ENCODE measurements at regions of chr15 and their contacts with region 1.

Region 1: GRCh38 chr15:40175160-40175559 is 14.3 kb downstream of the BUB1B start:
- DNase-seq: no peak
- ATAC-seq: no peak
- H3K4me3 ChIP-seq: no peak overlapping the region
- H3K27ac ChIP-seq: no peak overlapping the region
- H3K4me1 ChIP-seq: no peaks in the 10 kb centered on the region
- H3K27me3 ChIP-seq: no peaks in the 10 kb centered on the region
- CTCF ChIP-seq: no peak

Region 2: DNA sequence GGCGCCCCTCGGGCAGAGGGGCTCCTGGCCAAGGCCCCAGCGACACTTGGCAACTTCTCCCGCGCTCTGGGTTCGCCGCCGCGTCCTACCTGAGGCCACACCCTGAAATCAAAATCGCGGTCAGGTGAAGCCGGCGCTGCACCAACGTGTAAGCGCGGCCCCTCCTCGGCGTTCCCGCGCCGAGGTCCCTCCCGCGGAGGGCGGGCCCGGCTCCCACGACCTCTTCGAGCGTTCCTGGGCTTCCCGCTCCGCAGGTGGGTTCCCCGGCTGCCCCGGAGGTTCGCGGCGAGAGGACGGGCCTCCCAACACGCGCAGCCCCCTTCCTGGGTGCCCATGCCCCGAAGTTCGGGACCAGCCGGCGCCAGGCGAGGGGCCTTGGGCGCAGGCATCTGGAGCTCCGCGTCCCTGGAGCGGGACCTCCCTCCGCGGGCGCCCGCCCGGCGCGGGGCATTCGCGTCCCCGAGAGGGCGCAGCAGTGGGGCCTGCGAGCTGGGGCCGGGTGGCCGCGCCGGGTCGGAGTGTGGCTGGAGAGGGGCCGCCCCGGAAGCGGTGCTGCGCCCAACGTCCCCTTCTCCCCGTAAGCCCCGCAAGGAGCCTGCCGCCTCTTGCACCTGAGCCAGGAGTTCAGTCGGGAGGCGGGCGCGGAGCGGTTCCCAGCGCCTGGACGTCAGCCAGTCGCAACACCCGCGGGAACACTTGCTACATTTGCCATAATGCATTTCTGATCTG is 77.4 kb after region 1 on chr15:
- intact Hi-C with region 1: loop called in 1 of 10 experiments (anchors 5 kb)
- DNase-seq: peak in 1 of 2 donors; percentile 53
- ATAC-seq: peak; percentile 44 to 72 (median 53)
- H3K4me3 ChIP-seq: peak overlapping the region; percentile 9 to 70 (median 60)
- H3K27ac ChIP-seq: peak overlapping the region in 8 of 10 donors; percentile 8 to 63 (median 38)
- H3K4me1 ChIP-seq: peaks cover 6 to 37% (median 21%) of the 10 kb centered on the region in 9 donors
- H3K27me3 ChIP-seq: peaks cover 0 to 40% (median 33%) of the 10 kb centered on the region in 7 donors
- CTCF ChIP-seq: peak in 2 of 9 donors; percentile 14 to 25

Region 3: DNA sequence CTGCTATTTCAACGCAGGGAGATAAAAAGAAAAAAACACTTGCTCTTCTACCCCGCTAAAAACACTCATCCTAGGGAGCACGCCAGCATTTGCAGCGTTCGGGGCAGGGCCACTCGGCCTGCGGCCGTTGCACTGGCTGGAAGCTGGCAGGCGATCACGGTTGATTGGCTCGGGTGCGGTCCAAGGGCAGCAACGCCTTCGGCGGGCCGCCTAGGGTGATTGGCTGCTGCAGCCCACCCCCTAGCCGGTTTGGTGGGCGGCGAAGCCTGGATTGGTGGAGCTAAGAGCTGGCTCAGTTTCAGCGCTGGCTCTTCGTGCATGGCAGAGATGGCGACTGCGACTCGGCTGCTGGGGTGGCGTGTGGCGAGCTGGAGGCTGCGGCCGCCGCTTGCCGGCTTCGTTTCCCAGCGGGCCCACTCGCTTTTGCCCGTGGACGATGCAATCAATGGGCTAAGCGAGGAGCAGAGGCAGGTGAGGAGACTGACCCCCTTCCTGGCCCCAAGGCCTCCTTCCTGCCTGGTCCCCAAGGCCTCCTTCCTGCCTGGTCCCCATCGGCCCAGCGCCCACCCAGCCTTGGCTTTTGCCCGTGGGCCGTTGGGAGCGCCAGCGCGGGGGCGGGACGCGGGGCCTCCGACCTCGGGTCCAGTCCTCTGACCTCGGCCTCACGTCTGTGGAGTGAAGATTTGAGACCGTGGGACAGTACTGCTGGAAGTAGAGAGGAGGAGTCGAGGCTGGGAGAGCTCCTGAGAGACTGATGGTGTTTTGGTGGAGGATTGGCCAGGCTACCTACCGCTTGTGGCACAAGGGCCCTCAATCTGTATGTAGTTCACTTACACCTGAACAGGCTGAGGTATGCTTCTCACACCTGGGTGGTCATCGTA is 230.6 kb after region 1 on chr15 and contains the start of gene IVD:
- intact Hi-C with region 1: no loop called
- DNase-seq: peak; percentile 95 to 96
- ATAC-seq: peak; percentile 99 to 100 (median 100)
- H3K4me3 ChIP-seq: peak within 1 kb of the TSS; percentile 67 to 98 (median 82)
- H3K27ac ChIP-seq: peak within 1 kb of the TSS in 9 of 10 donors; percentile 62 to 87 (median 78)
- H3K4me1 ChIP-seq: peaks cover 0 to 31% (median 23%) of the 10 kb centered on the region in 9 donors
- H3K27me3 ChIP-seq: no peaks in the 10 kb centered on the region
- CTCF ChIP-seq: no peak
- total RNA-seq, gene IVD: 71.1 to 143 (median 109) TPM